CD4-positive, alpha-beta memory T cell (primary cell): ENCODE measurements at regions of chr9 and their contacts with region 1.

Region 1: DNA sequence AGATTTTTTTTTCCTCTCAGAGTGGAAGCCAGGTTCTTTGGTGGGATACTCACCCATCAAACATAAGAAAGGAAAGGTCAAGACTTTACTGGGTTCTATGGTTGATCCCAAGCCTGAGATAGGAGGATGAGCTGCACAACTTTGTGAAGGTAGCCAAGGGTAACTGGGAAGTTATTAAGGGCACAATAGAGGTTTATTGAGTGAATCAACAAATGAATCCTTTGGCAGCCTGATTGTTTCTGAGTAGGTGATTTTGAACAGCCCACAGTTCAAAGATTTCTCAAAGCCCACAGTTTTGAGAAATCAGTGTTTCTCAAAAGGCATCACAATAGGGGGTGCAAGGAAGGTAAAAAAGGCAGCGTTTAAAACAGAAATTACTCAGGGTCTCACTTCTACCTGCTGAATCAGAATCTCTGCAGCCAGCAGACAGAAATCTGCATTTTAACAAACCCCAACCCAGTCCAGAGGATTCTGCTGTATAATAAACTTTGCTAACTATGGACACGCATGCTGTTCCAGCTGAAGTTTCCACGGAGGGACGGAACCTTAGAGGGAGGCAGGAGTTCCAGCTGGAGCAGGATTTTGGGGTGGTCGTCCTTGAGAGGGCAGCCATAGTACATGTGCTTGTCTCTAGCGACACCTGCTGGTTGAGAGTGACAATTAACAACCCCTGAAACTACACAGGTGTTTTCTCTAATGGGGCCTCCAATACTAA is 32.7 kb upstream of the FSD1L start:
- DNase-seq: peak; percentile 51 to 64 (median 58)
- H3K4me3 ChIP-seq: no peak overlapping the region
- H3K4me3 Mint-ChIP-seq: no peak overlapping the region
- H3K27ac ChIP-seq: no peak overlapping the region
- H3K27ac Mint-ChIP-seq: no peak overlapping the region
- H3K4me1 ChIP-seq: no peaks in the 10 kb centered on the region
- H3K4me1 Mint-ChIP-seq: no peaks in the 10 kb centered on the region
- H3K27me3 ChIP-seq: peaks cover 6% of the 10 kb centered on the region
- H3K27me3 Mint-ChIP-seq: peaks cover 29 to 33% of the 10 kb centered on the region in 2 donors

Region 2: GRCh38 chr9:104808035-104808614 is 607.0 kb before region 1 on chr9:
- CTCF ChIA-PET with region 1: no interaction called
- POLR2A ChIA-PET with region 1: no interaction called
- intact Hi-C with region 1: loop called (anchors 1 kb)
- DNase-seq: no peak
- H3K4me3 ChIP-seq: no peak overlapping the region
- H3K4me3 Mint-ChIP-seq: no peak overlapping the region
- H3K27ac ChIP-seq: no peak overlapping the region
- H3K27ac Mint-ChIP-seq: no peak overlapping the region
- H3K4me1 ChIP-seq: no peaks in the 10 kb centered on the region
- H3K4me1 Mint-ChIP-seq: no peaks in the 10 kb centered on the region
- H3K27me3 ChIP-seq: no peaks in the 10 kb centered on the region
- H3K27me3 Mint-ChIP-seq: no peaks in the 10 kb centered on the region

Region 3: GRCh38 chr9:104863180-104863883 is 551.8 kb before region 1 on chr9:
- CTCF ChIA-PET with region 1: interaction called, 92 read pairs
- POLR2A ChIA-PET with region 1: no interaction called
- intact Hi-C with region 1: loop called (anchors 1 kb)
- DNase-seq: peak; percentile 51 to 65 (median 60)
- H3K4me3 ChIP-seq: no peak overlapping the region
- H3K4me3 Mint-ChIP-seq: no peak overlapping the region
- H3K27ac ChIP-seq: no peak overlapping the region
- H3K27ac Mint-ChIP-seq: peak overlapping the region in 1 of 7 donors; percentile 50
- H3K4me1 ChIP-seq: no peaks in the 10 kb centered on the region
- H3K4me1 Mint-ChIP-seq: peaks cover 0 to 9% (median 3%) of the 10 kb centered on the region in 4 donors
- H3K27me3 ChIP-seq: no peaks in the 10 kb centered on the region
- H3K27me3 Mint-ChIP-seq: no peaks in the 10 kb centered on the region

Region 4: DNA sequence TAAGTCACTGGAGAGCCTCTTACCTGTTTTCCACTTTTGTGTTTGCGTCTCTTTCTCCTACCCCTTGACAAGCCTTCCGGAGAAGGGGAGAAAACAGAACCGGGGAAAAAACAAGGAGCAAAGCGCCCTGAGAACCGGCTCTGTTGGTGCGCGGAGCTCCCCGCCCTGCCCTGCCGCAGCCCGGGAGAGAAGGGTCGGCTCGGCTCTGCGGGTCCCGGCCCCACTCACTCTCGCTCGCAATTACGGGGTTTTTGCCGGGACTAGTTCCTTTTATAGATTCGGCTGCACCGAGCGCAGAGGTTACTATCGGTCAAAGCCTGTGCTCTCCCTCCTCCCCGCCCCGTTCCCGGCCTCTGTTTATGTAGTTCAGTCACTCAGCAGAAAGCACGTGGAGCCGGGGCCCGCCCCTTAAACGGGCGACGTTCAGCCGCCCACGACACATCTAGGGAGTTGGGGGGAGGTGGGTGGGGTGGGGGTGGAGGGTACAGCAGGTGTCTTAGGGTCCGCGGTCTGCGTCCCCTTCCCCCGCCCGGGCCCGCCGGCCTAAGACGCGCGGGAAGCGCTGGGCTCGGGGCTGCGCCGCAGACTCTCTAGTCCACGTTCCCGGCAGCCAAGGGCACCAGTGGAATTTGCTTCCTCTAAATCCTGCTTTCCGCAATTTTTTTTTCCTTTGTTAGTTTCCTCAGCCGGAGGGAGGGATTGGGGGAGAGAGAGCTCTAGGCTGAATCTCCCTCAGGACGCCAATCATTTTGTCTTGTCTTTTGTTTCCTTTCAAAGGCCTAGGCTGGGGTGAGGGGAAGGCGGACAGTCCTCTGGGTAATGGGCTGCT is 487.0 kb before region 1 on chr9 and contains the start of gene ABCA1:
- CTCF ChIA-PET with region 1: interaction called, 7 read pairs
- POLR2A ChIA-PET with region 1: interaction called, 3 read pairs
- intact Hi-C with region 1: loop called (anchors 1 kb)
- DNase-seq: peak; percentile 56 to 83 (median 65)
- H3K4me3 ChIP-seq: peak within 1 kb of the TSS; percentile 62 to 69
- H3K4me3 Mint-ChIP-seq: peak within 1 kb of the TSS; percentile 90 to 94 (median 91)
- H3K27ac ChIP-seq: no peak within 1 kb of the TSS
- H3K27ac Mint-ChIP-seq: peak within 1 kb of the TSS in 6 of 7 donors; percentile 60 to 92 (median 80)
- H3K4me1 ChIP-seq: peaks cover 23% of the 10 kb centered on the region
- H3K4me1 Mint-ChIP-seq: peaks cover 4 to 19% (median 10%) of the 10 kb centered on the region in 4 donors
- H3K27me3 ChIP-seq: no peaks in the 10 kb centered on the region
- H3K27me3 Mint-ChIP-seq: peaks cover 0 to 14% of the 10 kb centered on the region in 2 donors
- total RNA-seq, gene ABCA1: 0.80 to 1.2 TPM